PC-3 (cell line): ENCODE measurements at regions of chr7 and their contacts with region 1.

Region 1: DNA sequence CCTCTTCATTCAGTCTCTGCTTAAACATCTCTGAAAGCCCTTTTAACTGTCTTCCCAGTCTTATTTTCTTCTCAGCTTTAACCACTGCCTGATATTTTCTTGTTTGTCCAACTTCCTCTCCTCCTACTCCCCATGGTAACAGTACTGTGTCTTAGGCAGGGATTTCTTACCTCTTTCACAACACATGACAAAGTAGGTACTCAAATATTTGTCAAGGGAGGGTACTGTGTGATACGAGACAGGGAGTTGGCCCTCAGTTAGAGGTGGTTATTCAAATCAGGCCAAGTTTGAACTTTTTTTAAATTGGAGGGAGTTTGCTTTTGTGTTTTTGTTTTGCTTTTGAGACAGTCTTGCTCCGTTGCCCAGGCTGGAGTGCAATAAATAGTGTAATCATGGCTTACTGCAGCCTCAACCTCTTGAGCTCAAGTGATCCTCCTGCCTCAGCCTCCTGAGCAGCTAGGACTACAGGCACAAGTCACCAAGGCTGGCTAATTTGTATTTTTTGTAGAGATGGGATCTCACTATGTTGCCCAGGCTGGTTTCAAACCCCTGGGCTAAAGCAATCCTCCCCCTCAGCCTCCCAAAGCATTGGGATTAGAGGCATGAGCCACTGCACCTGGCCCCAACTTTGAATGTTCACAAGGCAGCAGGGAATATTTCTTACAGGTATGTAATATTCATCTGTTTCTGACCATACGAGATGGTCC is 2.5 kb upstream of the KPNA7 start:
- DNase-seq: peak; percentile 97
- ATAC-seq: peak; percentile 79
- H3K4me3 ChIP-seq: peak overlapping the region; percentile 13; the same call in 1 of the 2 replicates
- H3K27ac ChIP-seq: peak overlapping the region; percentile 100
- H3K4me1 ChIP-seq: peaks cover 54% of the 10 kb centered on the region
- H3K27me3 ChIP-seq: no peaks in the 10 kb centered on the region
- CTCF ChIP-seq: no peak

Region 2: DNA sequence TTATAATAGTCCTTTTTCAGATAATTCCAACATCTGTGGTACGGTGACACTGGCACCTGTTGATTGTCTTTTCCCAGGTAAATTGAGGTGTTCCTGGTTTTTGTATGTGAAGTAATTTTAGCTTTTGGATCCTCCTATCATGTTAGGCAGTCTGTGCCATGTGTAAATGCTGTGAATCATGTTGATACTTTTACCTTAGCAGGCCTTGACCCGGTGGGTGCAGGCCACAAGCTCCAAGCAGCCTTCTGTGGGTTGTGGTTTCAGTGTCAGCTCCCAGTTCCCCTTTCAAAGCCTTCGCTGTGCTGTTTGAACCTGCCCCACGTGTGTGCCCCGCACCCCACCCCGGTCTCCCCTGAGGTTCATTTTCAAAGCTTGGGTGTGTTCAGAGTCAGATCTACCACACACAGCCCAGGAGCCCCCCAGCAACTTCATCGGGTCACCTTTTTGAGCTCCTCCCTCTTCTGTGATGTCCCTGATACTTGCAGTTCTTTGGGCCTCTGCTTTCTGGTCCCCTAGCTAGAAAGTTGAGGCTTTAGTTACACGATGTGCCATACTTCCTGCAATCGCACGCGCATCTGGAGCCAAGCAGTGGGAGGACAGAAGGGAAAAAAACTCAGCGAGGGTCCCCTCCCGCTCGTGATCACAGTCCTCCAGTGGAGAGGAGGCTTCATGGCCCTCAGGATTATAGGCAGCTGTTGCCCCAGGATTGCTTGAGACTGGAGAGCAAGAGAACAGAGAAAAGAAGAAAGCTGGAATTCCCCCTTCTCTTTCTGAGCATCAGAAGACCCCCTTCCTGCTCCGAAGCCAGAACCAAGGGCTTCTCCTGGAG is 1007.8 kb before region 1 on chr7:
- CTCF ChIA-PET with region 1: no interaction called
- POLR2A ChIA-PET with region 1: no interaction called
- intact Hi-C with region 1: no loop called
- DNase-seq: no peak
- ATAC-seq: no peak
- H3K4me3 ChIP-seq: no peak overlapping the region
- H3K27ac ChIP-seq: no peak overlapping the region
- H3K4me1 ChIP-seq: no peaks in the 10 kb centered on the region
- H3K27me3 ChIP-seq: no peaks in the 10 kb centered on the region
- CTCF ChIP-seq: no peak

Region 3: GRCh38 chr7:99040104-99040958 is 170.1 kb before region 1 on chr7:
- CTCF ChIA-PET with region 1: interaction called, 3 read pairs
- POLR2A ChIA-PET with region 1: interaction called, 4 read pairs
- intact Hi-C with region 1: loop called (anchors 5 kb)
- DNase-seq: peak; percentile 90
- ATAC-seq: peak; percentile 77
- H3K4me3 ChIP-seq: no peak overlapping the region
- H3K27ac ChIP-seq: peak overlapping the region; percentile 80
- H3K4me1 ChIP-seq: peaks cover 26% of the 10 kb centered on the region
- H3K27me3 ChIP-seq: no peaks in the 10 kb centered on the region
- CTCF ChIP-seq: peak; percentile 86

Region 4: GRCh38 chr7:99123571-99124041 is 86.8 kb before region 1 on chr7:
- CTCF ChIA-PET with region 1: no interaction called
- POLR2A ChIA-PET with region 1: no interaction called
- intact Hi-C with region 1: loop called (anchors 1 kb)
- DNase-seq: peak; percentile 81
- ATAC-seq: peak; percentile 74
- H3K4me3 ChIP-seq: peak overlapping the region; percentile 25; the same call in 1 of the 2 replicates
- H3K27ac ChIP-seq: peak overlapping the region; percentile 93
- H3K4me1 ChIP-seq: peaks cover 46% of the 10 kb centered on the region
- H3K27me3 ChIP-seq: no peaks in the 10 kb centered on the region
- CTCF ChIP-seq: no peak

Region 5: GRCh38 chr7:99267481-99267840 is 57.0 kb after region 1 on chr7:
- CTCF ChIA-PET with region 1: no interaction called
- POLR2A ChIA-PET with region 1: no interaction called
- intact Hi-C with region 1: loop called (anchors 1 kb)
- DNase-seq: peak; percentile 92
- ATAC-seq: peak; percentile 98
- H3K4me3 ChIP-seq: no peak overlapping the region
- H3K27ac ChIP-seq: peak overlapping the region; percentile 98
- H3K4me1 ChIP-seq: peaks cover 30% of the 10 kb centered on the region
- H3K27me3 ChIP-seq: no peaks in the 10 kb centered on the region
- CTCF ChIP-seq: no peak

Region 6: GRCh38 chr7:99374103-99375064 is 164.0 kb after region 1 on chr7 and contains the start of gene ARPC1B:
- CTCF ChIA-PET with region 1: no interaction called
- POLR2A ChIA-PET with region 1: no interaction called
- intact Hi-C with region 1: loop called (anchors 5 kb)
- DNase-seq: peak; percentile 68
- ATAC-seq: peak; percentile 72
- H3K4me3 ChIP-seq: peak within 1 kb of the TSS; percentile 87
- H3K27ac ChIP-seq: peak within 1 kb of the TSS; percentile 58
- H3K4me1 ChIP-seq: 0 out of 2 replicates have a peak, but pooled peaks cover under 1% of the 10 kb centered on the region
- H3K27me3 ChIP-seq: no peaks in the 10 kb centered on the region
- CTCF ChIP-seq: no peak
- total RNA-seq, gene ARPC1B: 358 and 381 TPM in 2 replicates